Heart right ventricle (tissue), 16 donors: ENCODE measurements at regions of chr19 and their contacts with region 1.

Region 1: GRCh38 chr19:9140159-9140874 is at the start of gene ZNF317:
- DNase-seq: peak; percentile 88 to 95
- ATAC-seq: peak; percentile 97 to 99 (median 98)
- H3K4me3 ChIP-seq: peak within 1 kb of the TSS; percentile 64 to 95 (median 84)
- H3K27ac ChIP-seq: peak within 1 kb of the TSS; percentile 59 to 94 (median 90)
- H3K4me1 ChIP-seq: peaks cover 0 to 30% (median 21%) of the 10 kb centered on the region in 9 donors
- H3K27me3 ChIP-seq: no peaks in the 10 kb centered on the region
- CTCF ChIP-seq: no peak
- total RNA-seq, gene ZNF317: 13.4 to 17.8 (median 15.7) TPM

Region 2: GRCh38 chr19:9205501-9206113 is 65.3 kb after region 1 on chr19:
- intact Hi-C with region 1: loop called in 3 of 10 experiments (anchors 2 to 10 kb)
- DNase-seq: peak; percentile 64 to 67
- ATAC-seq: peak in 7 of 8 donors; percentile 58 to 74 (median 69)
- H3K4me3 ChIP-seq: peak overlapping the region in 7 of 10 donors; percentile 27 to 48 (median 42)
- H3K27ac ChIP-seq: no peak overlapping the region
- H3K4me1 ChIP-seq: peaks cover 0 to 4% (median 0%) of the 10 kb centered on the region in 9 donors
- H3K27me3 ChIP-seq: peaks cover 0 to 42% (median 18%) of the 10 kb centered on the region in 7 donors
- CTCF ChIP-seq: peak; percentile 55 to 95 (median 90)